ENCODE measurements at regions of chr11 and their contacts with region 1.

Region 1: DNA sequence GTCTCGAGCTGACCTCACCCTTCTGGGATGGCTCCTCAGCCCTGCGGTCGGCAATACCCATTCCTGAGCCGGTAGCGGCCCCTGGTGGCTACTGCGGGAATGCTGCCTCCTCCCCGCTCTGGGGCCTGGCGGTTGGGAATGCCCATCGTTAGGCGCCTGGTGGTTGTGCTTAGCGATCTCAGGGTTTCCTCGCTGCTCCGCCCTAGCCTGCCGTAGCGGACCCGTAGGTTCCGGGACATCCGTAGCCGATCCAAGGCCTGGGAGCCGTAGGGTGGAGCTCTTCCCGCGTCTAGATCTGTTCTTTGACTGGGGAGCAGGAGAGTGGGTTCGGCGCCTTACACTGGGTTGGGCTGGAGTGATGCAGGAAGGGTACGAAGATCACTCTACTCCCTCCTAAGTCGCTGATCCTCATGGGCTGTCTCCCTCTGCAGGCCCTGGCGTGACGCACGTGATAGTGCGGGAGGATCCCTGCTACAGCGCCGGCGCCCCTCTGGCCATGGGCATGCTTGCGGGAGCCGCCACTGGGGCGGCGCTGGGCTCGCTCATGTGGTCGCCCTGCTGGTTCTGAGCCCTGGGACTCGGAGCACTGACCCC is 14.8 kb downstream of the PLEKHB1 start:
- DNase-seq: peak; percentile 16
- H3K4me3 ChIP-seq: peak overlapping the region; percentile 54
- CTCF ChIP-seq: peak; percentile 98

Region 2: DNA sequence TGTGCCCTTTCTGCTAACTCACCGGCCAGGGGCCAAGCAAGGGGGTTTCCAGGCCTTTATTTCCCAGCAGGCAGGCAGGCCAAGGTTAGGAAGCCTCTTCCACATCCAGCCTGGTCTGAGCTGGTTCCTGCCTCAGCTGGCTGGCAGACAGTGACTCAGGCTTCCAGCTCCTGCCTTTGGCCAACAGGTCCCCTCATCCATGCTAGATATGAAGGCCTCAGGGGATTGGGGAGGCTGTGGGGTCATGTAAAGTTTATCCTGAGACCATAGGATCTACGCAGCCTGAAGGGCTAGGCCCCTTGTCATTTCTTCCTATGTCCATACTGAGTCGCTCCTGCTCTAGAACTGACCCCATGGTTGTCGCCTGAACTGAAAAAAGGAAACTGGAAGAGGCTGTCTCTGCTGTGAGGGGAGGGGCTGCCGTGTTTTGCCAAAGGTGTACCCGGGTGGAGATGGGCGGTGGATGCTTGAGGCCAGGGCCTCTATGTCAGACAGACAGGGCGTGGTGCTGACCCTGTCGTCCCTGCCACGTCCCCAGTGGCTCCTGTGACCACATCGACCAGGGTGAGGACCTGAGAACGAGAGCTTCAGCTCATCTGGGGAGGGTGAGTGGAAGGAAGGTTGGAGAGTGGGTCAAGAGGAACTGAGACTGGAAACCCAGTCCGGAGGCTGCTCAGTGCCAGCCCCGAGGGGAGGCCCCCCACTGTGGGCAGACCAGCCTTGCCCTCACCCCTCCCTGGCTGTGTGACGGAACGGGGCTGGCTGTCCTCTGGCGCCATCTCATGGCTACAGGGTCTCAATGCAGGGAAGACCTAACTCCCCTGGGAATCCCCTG is 372.0 kb before region 1 on chr11:
- CTCF ChIA-PET with region 1: interaction called, 22 read pairs
- POLR2A ChIA-PET with region 1: no interaction called
- DNase-seq: no peak
- H3K4me3 ChIP-seq: no peak overlapping the region
- CTCF ChIP-seq: peak; percentile 97

Region 3: GRCh38 chr11:73366265-73366610 is 294.9 kb before region 1 on chr11:
- CTCF ChIA-PET with region 1: interaction called, 49 read pairs
- POLR2A ChIA-PET with region 1: no interaction called
- DNase-seq: no peak
- H3K4me3 ChIP-seq: no peak overlapping the region
- CTCF ChIP-seq: no peak

Region 4: GRCh38 chr11:73414977-73415651 is 246.0 kb before region 1 on chr11:
- CTCF ChIA-PET with region 1: interaction called, 43 read pairs
- POLR2A ChIA-PET with region 1: no interaction called
- DNase-seq: peak; percentile 95
- H3K4me3 ChIP-seq: no peak overlapping the region
- CTCF ChIP-seq: no peak

Region 5: DNA sequence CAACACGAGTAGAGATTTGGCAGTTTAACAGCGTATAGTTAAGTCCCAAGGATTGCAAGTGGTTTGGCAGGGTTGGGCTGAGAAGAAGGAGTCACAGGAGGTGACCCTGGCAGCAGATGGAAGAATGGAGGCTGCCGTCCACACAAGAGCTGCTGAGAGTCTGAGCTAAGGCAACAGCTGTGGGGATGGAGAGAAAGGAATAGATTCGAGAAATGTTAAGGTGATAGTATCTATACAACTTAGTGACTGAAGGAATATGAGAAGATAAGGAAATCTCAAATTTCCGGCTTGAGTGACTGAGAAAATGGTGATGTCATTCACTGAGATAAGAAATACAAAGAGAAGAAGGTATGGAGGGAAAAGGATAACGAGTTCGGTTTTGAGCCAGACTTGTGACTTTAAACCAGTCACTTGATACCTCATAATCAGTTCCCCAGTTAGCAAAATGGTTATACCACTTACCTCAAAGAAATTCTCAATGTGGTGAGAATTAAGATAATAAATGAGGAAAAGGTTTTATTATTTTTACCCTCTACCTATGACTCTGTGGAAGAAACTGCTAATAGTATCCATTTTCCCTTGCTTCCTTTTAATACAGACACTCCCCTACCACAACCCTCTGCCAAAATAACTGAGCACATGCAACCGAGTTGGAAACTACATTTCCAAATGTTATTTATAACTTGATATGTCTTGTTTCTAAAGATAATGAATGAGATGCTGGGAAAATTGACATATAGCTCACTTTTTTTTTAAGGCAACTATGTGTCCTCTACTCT is 94.0 kb before region 1 on chr11:
- CTCF ChIA-PET with region 1: interaction called, 14 read pairs
- POLR2A ChIA-PET with region 1: no interaction called
- DNase-seq: no peak
- H3K4me3 ChIP-seq: no peak overlapping the region
- CTCF ChIP-seq: no peak

Region 6: DNA sequence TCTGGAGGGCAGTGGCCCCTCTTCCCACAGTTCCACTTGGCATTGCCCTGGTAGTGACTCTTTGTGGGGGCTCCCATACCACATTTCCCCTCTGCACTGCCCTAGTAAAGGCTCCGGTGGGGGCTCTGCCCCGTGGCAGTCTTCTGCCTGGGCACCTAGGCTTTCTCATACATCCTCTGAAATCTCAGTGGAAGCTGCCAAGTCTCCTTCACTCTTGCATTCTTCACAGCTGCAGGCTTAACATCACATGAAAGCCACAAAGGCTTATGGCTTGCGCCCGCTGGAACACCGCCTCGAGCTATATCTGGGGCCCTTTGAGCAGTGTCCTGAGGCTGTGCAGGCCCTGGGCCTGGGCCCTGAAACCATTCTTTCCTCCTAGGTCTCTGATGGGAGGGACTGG is 10.6 kb after region 1 on chr11:
- CTCF ChIA-PET with region 1: interaction called, 28 read pairs
- POLR2A ChIA-PET with region 1: no interaction called
- DNase-seq: no peak
- H3K4me3 ChIP-seq: no peak overlapping the region
- CTCF ChIP-seq: no peak

Region 7: DNA sequence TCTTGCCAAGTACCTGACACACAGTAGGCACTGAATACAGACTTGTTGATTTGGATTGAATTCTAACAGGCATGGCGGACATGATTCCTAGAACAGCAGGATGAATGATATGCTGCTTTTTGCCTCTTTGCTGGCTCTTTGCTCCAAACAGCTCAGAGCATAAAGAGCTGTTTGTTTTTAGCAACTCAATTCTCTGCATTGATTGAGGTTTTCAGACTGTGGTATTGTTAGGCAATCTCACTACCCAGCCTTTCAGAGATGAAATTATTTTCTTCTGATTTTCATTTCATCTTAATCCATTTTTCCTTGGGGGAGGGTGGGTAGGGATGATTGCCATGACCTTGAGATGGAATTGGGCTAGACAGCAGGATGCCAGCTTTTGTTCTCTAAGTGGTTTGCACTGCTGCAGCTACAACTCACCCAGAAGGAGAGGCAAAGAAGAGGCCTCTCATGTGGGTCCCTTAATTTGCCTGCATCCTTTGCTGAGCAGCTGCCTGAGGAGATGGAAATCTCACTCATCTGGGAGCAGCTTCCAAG is 195.0 kb after region 1 on chr11:
- CTCF ChIA-PET with region 1: no interaction called
- POLR2A ChIA-PET with region 1: no interaction called
- DNase-seq: no peak
- H3K4me3 ChIP-seq: no peak overlapping the region
- CTCF ChIP-seq: no peak

Measured in AG04449 (cell line).